PC-3 (cell line): ENCODE measurements at regions of chr19 and their contacts with region 1.

Region 1: GRCh38 chr19:8473648-8474476 is 28.6 kb downstream of the PRAM1 start:
- DNase-seq: no peak
- ATAC-seq: no peak
- H3K4me3 ChIP-seq: no peak overlapping the region
- H3K27ac ChIP-seq: no peak overlapping the region
- H3K4me1 ChIP-seq: no peaks in the 10 kb centered on the region
- H3K27me3 ChIP-seq: no peaks in the 10 kb centered on the region
- CTCF ChIP-seq: no peak

Region 2: DNA sequence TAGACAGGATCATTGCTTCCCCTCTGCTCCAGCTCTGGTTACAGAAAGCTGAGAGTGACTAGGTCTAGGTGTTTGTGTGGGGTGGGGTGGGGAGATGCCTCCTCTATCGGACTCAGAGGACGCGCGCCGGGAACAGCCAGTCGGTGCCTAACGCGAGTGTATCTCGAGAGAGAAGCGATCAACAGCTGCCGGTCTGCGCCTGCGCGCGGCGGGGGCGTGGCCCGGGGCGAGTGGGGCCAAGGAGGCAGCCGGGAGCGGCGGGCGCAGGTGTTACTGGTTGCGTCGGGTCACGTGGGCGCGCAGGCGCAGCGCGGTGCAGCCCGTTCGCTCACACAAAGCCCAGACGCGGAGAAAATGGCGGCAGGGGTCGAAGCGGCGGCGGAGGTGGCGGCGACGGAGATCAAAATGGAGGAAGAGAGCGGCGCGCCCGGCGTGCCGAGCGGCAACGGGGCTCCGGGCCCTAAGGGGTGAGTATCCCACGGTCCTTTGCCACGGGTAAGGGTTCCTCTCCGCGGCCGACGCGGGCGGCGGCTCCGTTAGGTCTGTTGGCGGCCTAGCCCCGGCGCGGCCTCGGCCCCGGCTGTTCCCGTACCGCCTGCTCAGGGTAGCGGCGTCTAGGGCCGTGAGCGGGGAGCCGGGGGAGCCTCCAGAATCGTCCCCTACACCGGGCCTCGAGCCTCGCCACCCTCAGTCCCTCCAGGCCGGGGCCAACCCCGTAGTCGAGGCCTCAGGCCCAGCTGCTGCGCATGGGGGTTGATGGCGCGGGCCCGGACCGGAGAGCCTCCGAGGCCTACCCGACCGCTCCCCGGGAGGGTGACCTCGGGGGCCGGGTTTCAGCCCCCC is 29.0 kb before region 1 on chr19 and contains the start of gene HNRNPM:
- CTCF ChIA-PET with region 1: interaction called, 13 read pairs
- POLR2A ChIA-PET with region 1: no interaction called
- intact Hi-C with region 1: no loop called
- DNase-seq: peak; percentile 100
- ATAC-seq: peak; percentile 88
- H3K4me3 ChIP-seq: peak within 1 kb of the TSS; percentile 88
- H3K27ac ChIP-seq: peak within 1 kb of the TSS; percentile 63
- H3K4me1 ChIP-seq: peaks cover 30% of the 10 kb centered on the region
- H3K27me3 ChIP-seq: no peaks in the 10 kb centered on the region
- CTCF ChIP-seq: no peak
- total RNA-seq, gene HNRNPM: 165 and 287 TPM in 2 replicates

Region 3: DNA sequence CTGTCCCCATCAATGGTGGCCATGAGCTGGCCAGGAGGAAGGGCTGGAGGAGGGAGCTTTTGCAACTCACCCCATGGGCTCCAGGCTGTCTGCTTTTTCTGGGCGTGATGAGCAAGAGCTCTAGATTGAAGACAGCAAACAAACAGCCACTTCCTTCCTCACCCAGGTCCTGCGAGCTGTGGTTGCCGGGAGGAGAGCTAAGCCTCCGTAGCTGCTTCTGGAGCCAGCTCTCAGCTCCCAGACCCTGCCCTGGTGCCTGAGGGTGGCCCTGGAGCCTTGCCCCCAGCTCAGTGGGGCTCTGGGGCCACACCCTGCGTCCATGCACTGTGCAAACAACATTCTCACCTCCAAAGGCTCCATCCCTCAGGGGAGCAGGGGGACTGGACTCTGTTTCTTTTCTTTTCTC is 97.1 kb after region 1 on chr19:
- CTCF ChIA-PET with region 1: no interaction called
- POLR2A ChIA-PET with region 1: no interaction called
- intact Hi-C with region 1: no loop called
- DNase-seq: peak; percentile 87
- ATAC-seq: peak; percentile 89
- H3K4me3 ChIP-seq: peak overlapping the region; percentile 6; the same call in 1 of the 2 replicates
- H3K27ac ChIP-seq: peak overlapping the region; percentile 12
- H3K4me1 ChIP-seq: peaks cover 31% of the 10 kb centered on the region
- H3K27me3 ChIP-seq: no peaks in the 10 kb centered on the region
- CTCF ChIP-seq: no peak